ENCODE measurements at regions of chr12 and their contacts with region 1.

Region 1: GRCh38 chr12:7994731-7995205 is 37.7 kb upstream of the FOXJ2 start:
- DNase-seq: no peak

Region 2: GRCh38 chr12:6507102-6507998 is 1487.4 kb before region 1 on chr12:
- intact Hi-C with region 1: no loop called
- DNase-seq: no peak

Region 3: DNA sequence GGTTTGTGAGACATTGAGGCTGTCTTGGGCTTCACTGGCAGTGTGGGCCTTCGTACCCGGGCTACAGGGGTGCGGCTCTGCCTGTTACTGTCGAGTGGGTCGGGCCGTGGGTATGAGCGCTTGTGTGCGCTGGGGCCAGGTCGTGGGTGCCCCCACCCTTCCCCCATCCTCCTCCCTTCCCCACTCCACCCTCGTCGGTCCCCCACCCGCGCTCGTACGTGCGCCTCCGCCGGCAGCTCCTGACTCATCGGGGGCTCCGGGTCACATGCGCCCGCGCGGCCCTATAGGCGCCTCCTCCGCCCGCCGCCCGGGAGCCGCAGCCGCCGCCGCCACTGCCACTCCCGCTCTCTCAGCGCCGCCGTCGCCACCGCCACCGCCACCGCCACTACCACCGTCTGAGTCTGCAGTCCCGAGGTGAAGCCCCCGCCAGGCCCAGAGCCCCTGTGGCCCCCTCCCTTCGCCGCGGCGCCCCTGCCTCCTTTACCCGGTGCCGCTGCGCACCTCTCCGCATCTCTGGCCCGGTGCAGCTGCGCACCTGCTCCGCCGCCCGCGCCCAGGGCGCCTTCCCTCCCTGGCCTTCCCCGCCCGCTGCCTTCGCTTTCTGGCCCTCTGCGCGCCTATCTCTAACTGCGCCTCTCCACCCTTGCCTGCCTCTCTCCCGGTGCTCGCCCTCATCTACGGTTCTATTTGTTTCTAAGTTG is 1080.4 kb before region 1 on chr12 and contains the start of gene ENO2:
- intact Hi-C with region 1: no loop called
- DNase-seq: peak; percentile 93
- total RNA-seq, gene ENO2: 45.6 to 57.1 TPM

Region 4: GRCh38 chr12:7859552-7859951 is 135.2 kb before region 1 on chr12:
- intact Hi-C with region 1: loop called in 1 of 2 experiments (anchors 5 kb)
- DNase-seq: no peak

Region 5: DNA sequence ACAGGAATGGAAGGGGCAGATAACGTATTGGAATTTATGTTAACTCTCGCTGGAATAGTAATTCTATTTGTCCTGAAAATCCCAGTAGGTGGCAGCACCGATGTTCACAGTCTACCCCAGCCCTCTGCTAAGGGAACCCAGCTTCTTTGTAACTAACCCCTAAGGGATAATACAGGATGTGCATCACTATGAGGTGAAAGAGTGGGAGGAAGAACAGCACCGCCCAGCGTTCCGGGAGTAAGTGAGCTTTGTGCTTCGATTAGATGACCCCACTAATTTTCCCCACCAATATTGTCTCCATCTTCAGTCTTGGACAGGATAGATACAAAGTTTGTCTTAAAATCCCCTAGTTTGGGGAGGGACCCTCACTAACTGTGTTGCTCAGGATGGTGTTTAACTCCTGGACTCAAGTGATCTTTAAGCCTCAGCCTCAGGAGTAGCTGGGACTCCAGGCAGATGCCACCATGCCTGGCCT is 61.5 kb before region 1 on chr12:
- intact Hi-C with region 1: loop called in 1 of 2 experiments (anchors 5 kb)
- DNase-seq: peak; percentile 91